Endothelial cell of umbilical vein (primary cell): ENCODE measurements at regions of chr11 and their contacts with region 1.

Region 1: GRCh38 chr11:6619004-6619745 is at the start of gene TPP1:
- DNase-seq: peak; percentile 97
- H3K4me3 ChIP-seq: peak within 1 kb of the TSS; percentile 26 to 88 (median 87)
- H3K27ac ChIP-seq: peak within 1 kb of the TSS; percentile 68
- H3K4me1 ChIP-seq: peaks cover 33% of the 10 kb centered on the region
- H3K27me3 ChIP-seq: no peaks in the 10 kb centered on the region
- CTCF ChIP-seq: no peak
- POLR2A ChIP-seq: peak; percentile 92
- total RNA-seq, gene TPP1: 101 and 124 TPM in 2 replicates

Region 2: GRCh38 chr11:6473481-6474422 is 145.4 kb before region 1 on chr11 and contains the start of gene TRIM3:
- CTCF ChIA-PET with region 1: interaction called, 3 read pairs
- POLR2A ChIA-PET with region 1: no interaction called
- dilution Hi-C with region 1: no loop called
- intact Hi-C with region 1: loop called (anchors 2 kb)
- DNase-seq: peak; percentile 87
- H3K4me3 ChIP-seq: peak within 1 kb of the TSS; percentile 61 to 87 (median 68)
- H3K27ac ChIP-seq: peak within 1 kb of the TSS; percentile 87
- H3K4me1 ChIP-seq: peaks cover 21% of the 10 kb centered on the region
- H3K27me3 ChIP-seq: no peaks in the 10 kb centered on the region
- CTCF ChIP-seq: peak in 1 of 2 donors; percentile 42
- POLR2A ChIP-seq: peak; percentile 95
- total RNA-seq, gene TRIM3: 25.6 and 29.2 TPM in 2 replicates

Region 3: DNA sequence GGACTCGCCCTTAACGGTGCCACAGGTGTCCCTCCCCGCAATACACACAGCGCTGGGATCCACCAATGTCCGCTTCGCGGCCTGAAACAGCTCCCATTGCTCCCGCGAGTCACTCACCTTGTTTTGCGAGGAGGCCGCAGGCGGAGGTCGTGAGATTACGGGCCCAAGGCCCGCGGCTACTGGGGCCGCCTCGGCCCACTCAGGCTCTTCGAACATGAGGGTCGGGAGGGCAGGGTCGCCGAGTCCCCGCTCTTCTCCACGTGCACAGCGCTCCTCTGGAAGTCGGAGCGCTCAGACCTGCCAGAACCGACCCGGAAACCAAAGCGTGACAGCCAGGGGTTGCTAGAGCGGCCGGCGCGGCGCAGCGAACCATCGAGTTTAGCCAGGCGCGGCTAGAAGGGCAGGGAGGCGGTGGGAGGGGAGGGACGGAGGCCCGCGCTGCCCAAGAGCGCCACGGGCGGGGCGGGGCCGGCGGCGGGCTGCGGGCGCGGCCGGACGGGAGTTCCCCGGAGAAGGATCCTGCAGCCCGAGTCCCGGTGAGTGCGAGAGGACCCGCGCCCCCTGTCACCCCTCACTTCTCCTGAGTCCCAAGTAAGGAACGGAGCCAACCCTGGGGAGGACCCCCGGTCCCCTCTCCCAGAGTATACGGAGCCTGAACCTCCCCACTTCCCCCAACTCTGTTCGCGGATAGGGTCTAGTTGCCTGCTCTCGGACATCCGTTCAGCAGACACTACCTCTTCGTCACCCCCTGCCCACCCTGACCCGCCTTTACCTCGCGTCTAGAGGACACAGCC is 15.7 kb before region 1 on chr11 and contains the starts of genes ILK and RRP8:
- CTCF ChIA-PET with region 1: interaction called, 40 read pairs
- POLR2A ChIA-PET with region 1: interaction called, 7 read pairs
- dilution Hi-C with region 1: no loop called
- intact Hi-C with region 1: loop called (anchors 1 kb)
- DNase-seq: peak; percentile 93
- H3K4me3 ChIP-seq: peak within 1 kb of the TSS; percentile 62 to 97 (median 90)
- H3K27ac ChIP-seq: peak within 1 kb of the TSS; percentile 83
- H3K4me1 ChIP-seq: peaks cover 44% of the 10 kb centered on the region
- H3K27me3 ChIP-seq: no peaks in the 10 kb centered on the region
- CTCF ChIP-seq: no peak
- POLR2A ChIP-seq: peak; percentile 87
- total RNA-seq, gene ILK: 221 and 233 TPM in 2 replicates
- total RNA-seq, gene RRP8: 19.4 and 23.3 TPM in 2 replicates

Region 4: DNA sequence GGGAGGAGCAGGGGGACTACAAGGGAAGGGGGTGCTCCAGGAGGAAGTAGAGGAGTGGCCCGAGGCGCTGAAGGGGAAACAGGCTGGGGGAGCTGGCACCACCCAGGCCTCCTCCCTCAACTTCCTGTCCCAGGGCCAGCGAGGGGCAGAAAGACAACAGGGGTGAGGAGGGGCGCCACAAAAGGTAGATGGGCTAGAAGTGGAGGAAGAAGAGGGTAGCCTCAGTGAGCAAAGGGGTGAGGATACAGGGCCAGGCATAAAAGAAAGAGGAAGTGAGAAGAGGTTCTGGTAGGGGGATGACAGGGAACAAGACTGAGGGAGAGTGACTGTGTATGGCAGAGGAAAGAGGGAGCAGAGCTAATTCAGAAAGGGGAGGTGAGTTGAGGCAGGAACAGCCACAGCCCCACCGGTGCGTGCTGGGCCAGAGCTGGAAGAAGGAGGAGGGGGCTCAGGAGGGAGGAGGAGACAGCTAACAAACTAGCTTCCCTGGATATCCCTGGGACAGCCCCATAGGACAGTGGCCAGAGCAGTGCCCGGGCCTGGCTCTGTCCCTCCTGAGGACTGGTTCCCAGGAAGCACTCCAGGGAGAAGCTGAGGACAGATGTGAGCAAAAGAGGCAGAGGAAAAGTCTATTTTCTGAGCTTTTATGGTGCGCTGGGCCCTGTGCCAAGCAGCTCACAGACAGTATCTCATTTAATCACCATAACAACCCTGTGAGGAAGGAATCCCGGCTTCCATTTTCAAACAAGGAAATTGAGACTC is 27.9 kb after region 1 on chr11:
- CTCF ChIA-PET with region 1: interaction called, 3 read pairs
- POLR2A ChIA-PET with region 1: no interaction called
- dilution Hi-C with region 1: no loop called
- intact Hi-C with region 1: loop called (anchors 1 kb)
- DNase-seq: peak; percentile 67
- H3K4me3 ChIP-seq: no peak overlapping the region
- H3K27ac ChIP-seq: peak overlapping the region; percentile 84
- H3K4me1 ChIP-seq: peaks cover 37% of the 10 kb centered on the region
- H3K27me3 ChIP-seq: no peaks in the 10 kb centered on the region
- CTCF ChIP-seq: no peak
- POLR2A ChIP-seq: no peak

Region 5: DNA sequence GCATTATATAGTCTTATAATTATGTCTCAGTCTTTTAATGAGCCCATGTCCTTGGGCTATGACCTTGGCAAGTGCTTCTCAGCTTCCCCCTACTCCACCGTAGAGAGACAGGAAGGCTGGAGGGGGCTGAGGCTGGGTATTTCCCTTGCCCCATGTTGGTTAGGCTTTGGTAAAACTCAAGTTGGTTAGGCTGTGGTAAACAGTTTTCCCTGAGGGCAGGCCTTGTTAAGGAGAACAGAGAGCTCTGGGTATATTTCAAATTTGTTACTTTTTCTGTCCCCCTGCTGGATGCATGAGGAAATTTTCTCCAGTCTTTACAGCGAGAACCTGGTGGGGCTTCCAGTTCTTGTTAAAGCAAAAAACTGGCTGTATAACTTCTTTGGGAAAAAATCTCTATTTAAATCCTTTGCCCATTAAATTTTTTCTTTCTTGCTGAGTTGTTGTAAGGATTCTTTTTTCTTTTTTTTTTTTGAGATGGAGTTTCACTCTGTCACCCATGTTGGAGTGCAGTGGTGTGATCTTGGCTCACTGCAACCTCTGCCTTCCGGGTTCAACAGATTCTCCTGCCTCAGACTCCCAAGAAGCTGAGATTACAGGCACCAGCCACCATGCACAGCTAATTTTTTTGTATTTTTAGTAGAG is 48.7 kb after region 1 on chr11:
- CTCF ChIA-PET with region 1: interaction called, 35 read pairs
- POLR2A ChIA-PET with region 1: no interaction called
- dilution Hi-C with region 1: no loop called
- intact Hi-C with region 1: loop called (anchors 1 kb)
- DNase-seq: peak; percentile 34
- H3K4me3 ChIP-seq: no peak overlapping the region
- H3K27ac ChIP-seq: no peak overlapping the region
- H3K4me1 ChIP-seq: no peaks in the 10 kb centered on the region
- H3K27me3 ChIP-seq: no peaks in the 10 kb centered on the region
- CTCF ChIP-seq: peak; percentile 39 to 53
- POLR2A ChIP-seq: no peak